Activated CD8-positive, alpha-beta T cell treated with anti-CD3 and anti-CD28 coated beads, Interleukin-2, amount 10 ng/mL, durations not matched to agents 7 days and 5 days (primary cell): ENCODE measurements at regions of chr17 and their contacts with region 1.

Region 1: GRCh38 chr17:879549-880442 is 97.6 kb downstream of the MRM3 start:
- DNase-seq: peak; percentile 79
- ATAC-seq: peak; percentile 55
- H3K4me3 Mint-ChIP-seq: no peak overlapping the region
- H3K27ac Mint-ChIP-seq: no peak overlapping the region
- H3K4me1 Mint-ChIP-seq: peaks cover 22% of the 10 kb centered on the region
- H3K27me3 Mint-ChIP-seq: peaks cover 21% of the 10 kb centered on the region

Region 2: DNA sequence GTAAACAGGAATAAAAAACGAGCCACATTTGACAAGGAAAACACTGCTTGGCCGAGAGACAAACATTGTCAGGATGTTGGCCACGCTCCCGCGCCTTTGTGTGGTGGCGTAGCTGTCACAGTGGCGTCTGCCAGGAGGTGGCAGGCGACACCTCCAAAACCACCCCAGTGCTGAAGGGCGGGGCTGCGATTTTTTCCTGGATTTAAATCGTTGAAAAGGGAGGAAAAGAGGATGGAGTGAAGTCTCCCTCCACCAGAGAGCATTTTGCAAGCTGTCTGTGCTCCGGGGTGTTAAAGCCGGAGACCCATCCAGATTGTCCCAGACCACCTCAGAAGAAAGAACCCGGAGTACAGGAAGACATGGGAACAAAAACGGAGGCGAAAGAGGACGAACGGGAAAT is 84.9 kb before region 1 on chr17:
- CTCF ChIA-PET with region 1: interaction called, 15 read pairs
- POLR2A ChIA-PET with region 1: no interaction called
- DNase-seq: peak; percentile 62
- ATAC-seq: peak; percentile 74
- H3K4me3 Mint-ChIP-seq: no peak overlapping the region
- H3K27ac Mint-ChIP-seq: no peak overlapping the region
- H3K4me1 Mint-ChIP-seq: peaks cover 7% of the 10 kb centered on the region
- H3K27me3 Mint-ChIP-seq: no peaks in the 10 kb centered on the region

Region 3: GRCh38 chr17:1008008-1008815 is 128.4 kb after region 1 on chr17:
- CTCF ChIA-PET with region 1: no interaction called
- POLR2A ChIA-PET with region 1: no interaction called
- DNase-seq: no peak
- ATAC-seq: no peak
- H3K4me3 Mint-ChIP-seq: no peak overlapping the region
- H3K27ac Mint-ChIP-seq: no peak overlapping the region
- H3K4me1 Mint-ChIP-seq: peaks cover 9% of the 10 kb centered on the region
- H3K27me3 Mint-ChIP-seq: no peaks in the 10 kb centered on the region